ENCODE measurements at regions of chr9 and their contacts with region 1.

Region 1: GRCh38 chr9:116149844-116150243 is 3.7 kb upstream of the PAPPA start:
- DNase-seq: no peak
- H3K4me3 ChIP-seq: no peak overlapping the region
- H3K27ac ChIP-seq: no peak overlapping the region
- H3K4me1 ChIP-seq: peaks cover 0 to 14% (median 9%) of the 10 kb centered on the region in 4 donors
- H3K27me3 ChIP-seq: peaks cover 6 to 36% (median 6%) of the 10 kb centered on the region in 3 donors
- CTCF ChIP-seq: peak in 2 of 4 experiments; percentile 30 to 31
- EP300 ChIP-seq: no peak
- POLR2A ChIP-seq: no peak

Region 2: GRCh38 chr9:115649991-115650472 is 499.8 kb before region 1 on chr9:
- intact Hi-C with region 1: loop called (anchors 10 kb)
- DNase-seq: peak; percentile 95
- H3K4me3 ChIP-seq: no peak overlapping the region
- H3K27ac ChIP-seq: peak overlapping the region; percentile 61 to 71 (median 68)
- H3K4me1 ChIP-seq: peaks cover 0 to 16% (median 8%) of the 10 kb centered on the region in 4 donors
- H3K27me3 ChIP-seq: no peaks in the 10 kb centered on the region
- CTCF ChIP-seq: no peak
- EP300 ChIP-seq: peak; percentile 65 to 93 (median 84)
- POLR2A ChIP-seq: no peak

Region 3: DNA sequence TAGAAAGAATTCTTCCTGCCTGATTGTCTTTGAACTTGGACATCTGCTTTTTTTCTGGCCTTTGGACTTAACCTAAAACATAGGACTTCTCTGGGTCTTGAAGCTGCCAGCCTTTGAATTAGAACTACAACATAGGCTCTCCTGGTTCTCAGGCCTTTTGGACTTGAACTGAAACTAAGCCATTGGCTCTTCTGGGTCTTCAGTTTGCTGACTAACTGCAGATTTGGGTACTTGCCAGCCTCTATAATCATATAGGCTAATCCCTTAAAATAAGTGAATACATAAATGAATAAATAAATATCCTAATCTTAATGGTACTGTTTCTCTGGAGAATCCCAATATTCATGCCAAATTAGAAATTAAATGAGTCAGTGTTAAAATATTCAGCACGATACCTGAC is 469.6 kb before region 1 on chr9:
- intact Hi-C with region 1: loop called (anchors 10 kb)
- DNase-seq: no peak
- H3K4me3 ChIP-seq: no peak overlapping the region
- H3K27ac ChIP-seq: no peak overlapping the region
- H3K4me1 ChIP-seq: peaks cover 0 to 4% (median 0%) of the 10 kb centered on the region in 4 donors
- H3K27me3 ChIP-seq: no peaks in the 10 kb centered on the region
- CTCF ChIP-seq: no peak
- EP300 ChIP-seq: no peak
- POLR2A ChIP-seq: no peak

Region 4: DNA sequence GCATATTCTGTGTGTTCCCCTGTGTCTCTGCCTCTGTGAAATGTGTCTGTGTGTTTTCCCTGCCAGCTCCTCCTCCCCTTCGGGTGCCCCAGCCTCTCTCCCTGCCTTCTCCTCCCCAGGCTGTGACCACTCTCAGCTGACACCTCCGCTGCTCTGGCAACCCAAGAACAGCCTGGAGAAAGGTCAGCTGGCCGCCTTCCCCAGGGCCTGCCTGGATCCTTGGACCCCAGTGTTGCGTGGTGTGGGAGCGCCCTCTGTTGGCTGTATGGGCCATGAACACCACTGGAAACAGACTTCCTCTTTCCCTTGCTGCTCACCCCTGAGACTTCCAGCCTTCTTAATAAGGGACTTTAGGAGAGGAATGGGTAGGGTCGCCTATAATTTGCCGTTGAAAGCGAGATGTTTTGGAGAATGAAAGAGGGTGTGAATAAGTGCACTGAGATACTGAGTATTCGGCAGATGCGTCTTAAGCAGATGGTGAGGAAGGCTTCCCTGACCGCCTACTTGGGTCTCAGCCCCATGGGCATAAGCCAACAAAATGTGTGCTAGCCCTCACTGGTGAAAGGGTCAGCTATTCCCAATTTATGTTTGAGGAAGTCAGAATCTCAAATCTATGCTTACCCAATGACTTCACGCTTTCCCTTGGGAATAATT is 422.4 kb after region 1 on chr9:
- intact Hi-C with region 1: loop called (anchors 5 kb)
- DNase-seq: peak; percentile 94
- H3K4me3 ChIP-seq: no peak overlapping the region
- H3K27ac ChIP-seq: no peak overlapping the region
- H3K4me1 ChIP-seq: peaks cover 0 to 22% (median 9%) of the 10 kb centered on the region in 4 donors
- H3K27me3 ChIP-seq: no peaks in the 10 kb centered on the region
- CTCF ChIP-seq: peak; percentile 81 to 93 (median 88)
- EP300 ChIP-seq: no peak
- POLR2A ChIP-seq: no peak

Region 5: GRCh38 chr9:116646661-116647512 is 497.0 kb after region 1 on chr9:
- intact Hi-C with region 1: loop called (anchors 10 kb)
- DNase-seq: no peak
- H3K4me3 ChIP-seq: no peak overlapping the region
- H3K27ac ChIP-seq: no peak overlapping the region
- H3K4me1 ChIP-seq: peaks cover 0 to 7% (median 2%) of the 10 kb centered on the region in 4 donors
- H3K27me3 ChIP-seq: no peaks in the 10 kb centered on the region
- CTCF ChIP-seq: peak in 2 of 4 experiments; percentile 14 to 47
- EP300 ChIP-seq: no peak
- POLR2A ChIP-seq: no peak